H1 (cell line): ENCODE measurements at regions of chr2 and their contacts with region 1.

Region 1: GRCh38 chr2:237616734-237617586 is 10.4 kb upstream of the LRRFIP1 start:
- DNase-seq: no peak
- H3K4me3 ChIP-seq: no peak overlapping the region
- H3K27ac ChIP-seq: no peak overlapping the region
- H3K4me1 ChIP-seq: peaks cover 9 to 21% (median 17%) of the 10 kb centered on the region in 4 experiments
- H3K27me3 ChIP-seq: no peaks in the 10 kb centered on the region; a peak in 1 of 7 replicates
- CTCF ChIP-seq: no peak
- EP300 ChIP-seq: no peak
- POLR2A ChIP-seq: no peak
- RAD21 ChIP-seq: no peak

Region 2: GRCh38 chr2:237540823-237541222 is 76.1 kb before region 1 on chr2:
- CTCF ChIA-PET with region 1: no interaction called
- POLR2A ChIA-PET with region 1: no interaction called
- DNase-seq: no peak
- H3K4me3 ChIP-seq: no peak overlapping the region
- H3K27ac ChIP-seq: no peak overlapping the region
- H3K4me1 ChIP-seq: no peaks in the 10 kb centered on the region; a peak in 1 of 7 replicates
- H3K27me3 ChIP-seq: no peaks in the 10 kb centered on the region
- CTCF ChIP-seq: no peak
- EP300 ChIP-seq: no peak
- POLR2A ChIP-seq: no peak
- RAD21 ChIP-seq: no peak

Region 3: GRCh38 chr2:237581751-237582746 is 34.9 kb before region 1 on chr2:
- CTCF ChIA-PET with region 1: interaction called, 14 read pairs
- POLR2A ChIA-PET with region 1: interaction called, 19 read pairs
- DNase-seq: no peak
- H3K4me3 ChIP-seq: no peak overlapping the region
- H3K27ac ChIP-seq: no peak overlapping the region
- H3K4me1 ChIP-seq: peaks cover 0 to 19% (median 14%) of the 10 kb centered on the region in 4 experiments; a peak in 6 of 7 replicates
- H3K27me3 ChIP-seq: no peaks in the 10 kb centered on the region
- CTCF ChIP-seq: peak in 2 of 3 experiments; percentile 30 to 51; a peak in 2 of 4 replicates
- EP300 ChIP-seq: no peak
- POLR2A ChIP-seq: no peak
- RAD21 ChIP-seq: peak; percentile 54 to 69

Region 4: DNA sequence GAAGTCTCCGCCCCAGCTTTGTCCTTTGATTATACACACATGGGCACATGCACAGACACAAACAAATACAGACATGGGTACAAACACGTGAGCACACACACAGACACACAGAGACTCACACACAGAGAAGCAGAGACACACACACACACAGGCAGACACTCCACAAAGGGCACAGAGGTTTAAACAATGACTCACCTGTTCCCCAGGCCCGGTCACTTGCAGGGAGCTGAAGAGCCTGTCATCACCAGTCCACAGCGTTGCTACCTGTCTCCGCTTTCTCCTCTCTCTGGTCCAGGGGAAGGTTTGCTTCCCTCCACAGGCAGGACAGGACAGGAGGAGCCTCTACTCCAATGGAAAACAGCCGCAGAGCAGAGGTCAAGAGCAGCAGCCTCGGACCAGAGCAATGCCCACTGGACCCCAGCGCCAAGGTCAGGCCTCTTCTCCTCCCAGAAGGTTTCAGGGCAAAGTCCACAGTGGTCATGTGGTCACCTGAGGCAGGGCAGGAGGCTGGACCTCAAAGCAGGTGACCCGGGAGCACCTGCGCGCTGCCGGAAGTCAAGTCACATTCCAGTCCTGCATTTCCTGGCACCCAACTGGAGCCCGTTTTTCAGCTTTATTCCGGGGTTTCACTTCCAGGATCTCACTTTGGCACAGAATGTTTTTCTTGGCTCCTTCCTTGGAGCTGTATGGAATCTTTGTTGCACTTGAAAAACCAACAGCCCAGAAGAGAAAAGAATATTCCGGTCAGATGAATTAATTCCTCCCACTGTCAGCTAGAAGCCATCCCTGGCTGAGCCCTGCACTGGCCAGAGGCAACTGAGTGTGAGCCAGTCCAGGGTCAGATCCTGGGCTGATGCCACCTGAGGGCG is 26.5 kb before region 1 on chr2 and contains the start of gene RAB17:
- CTCF ChIA-PET with region 1: interaction called, 20 read pairs
- POLR2A ChIA-PET with region 1: interaction called, 25 read pairs
- DNase-seq: no peak
- H3K4me3 ChIP-seq: peak within 1 kb of the TSS; percentile 45 to 59 (median 58)
- H3K27ac ChIP-seq: peak within 1 kb of the TSS; percentile 25; the same call in 1 of the 2 replicates
- H3K4me1 ChIP-seq: peaks cover 19 to 62% (median 33%) of the 10 kb centered on the region in 4 experiments
- H3K27me3 ChIP-seq: no peaks in the 10 kb centered on the region
- CTCF ChIP-seq: no peak
- EP300 ChIP-seq: no peak
- POLR2A ChIP-seq: peak in 1 of 2 experiments; percentile 45; a peak in 1 of 3 replicates
- RAD21 ChIP-seq: no peak
- total RNA-seq, gene RAB17: 83.4 and 83.8 TPM in 2 replicates

Region 5: GRCh38 chr2:237627441-237628246 is 10.7 kb after region 1 on chr2 and contains the start of gene LRRFIP1:
- CTCF ChIA-PET with region 1: interaction called, 12 read pairs
- POLR2A ChIA-PET with region 1: interaction called, 42 read pairs
- DNase-seq: peak in 1 of 2 experiments; percentile 54
- H3K4me3 ChIP-seq: peak within 1 kb of the TSS; percentile 54 to 75 (median 56)
- H3K27ac ChIP-seq: no peak within 1 kb of the TSS
- H3K4me1 ChIP-seq: peaks cover 3 to 13% (median 8%) of the 10 kb centered on the region in 4 experiments; a peak in 5 of 7 replicates
- H3K27me3 ChIP-seq: peaks cover 0 to 31% (median 24%) of the 10 kb centered on the region in 4 experiments; a peak in 6 of 7 replicates
- CTCF ChIP-seq: no peak
- EP300 ChIP-seq: no peak
- POLR2A ChIP-seq: no peak
- RAD21 ChIP-seq: no peak
- total RNA-seq, gene LRRFIP1: 68.6 and 75.8 TPM in 2 replicates

Region 6: GRCh38 chr2:237752761-237753165 is 135.8 kb after region 1 on chr2:
- CTCF ChIA-PET with region 1: no interaction called
- POLR2A ChIA-PET with region 1: no interaction called
- DNase-seq: no peak
- H3K4me3 ChIP-seq: no peak overlapping the region
- H3K27ac ChIP-seq: no peak overlapping the region
- H3K4me1 ChIP-seq: no peaks in the 10 kb centered on the region
- H3K27me3 ChIP-seq: no peaks in the 10 kb centered on the region
- CTCF ChIP-seq: no peak
- EP300 ChIP-seq: no peak
- POLR2A ChIP-seq: no peak
- RAD21 ChIP-seq: no peak